Ovary (tissue), 10 donors: ENCODE measurements at regions of chr19 and their contacts with region 1.

Region 1: GRCh38 chr19:6048808-6049405 is 61.4 kb downstream of the RFX2 start:
- DNase-seq: peak; percentile 71 to 82 (median 82)
- H3K4me3 ChIP-seq: no peak overlapping the region
- H3K27ac ChIP-seq: no peak overlapping the region
- H3K4me1 ChIP-seq: peaks cover 1% of the 10 kb centered on the region
- H3K27me3 ChIP-seq: no peaks in the 10 kb centered on the region
- CTCF ChIP-seq: peak; percentile 68 to 78 (median 76)
- EP300 ChIP-seq: no peak
- POLR2A ChIP-seq: no peak

Region 2: DNA sequence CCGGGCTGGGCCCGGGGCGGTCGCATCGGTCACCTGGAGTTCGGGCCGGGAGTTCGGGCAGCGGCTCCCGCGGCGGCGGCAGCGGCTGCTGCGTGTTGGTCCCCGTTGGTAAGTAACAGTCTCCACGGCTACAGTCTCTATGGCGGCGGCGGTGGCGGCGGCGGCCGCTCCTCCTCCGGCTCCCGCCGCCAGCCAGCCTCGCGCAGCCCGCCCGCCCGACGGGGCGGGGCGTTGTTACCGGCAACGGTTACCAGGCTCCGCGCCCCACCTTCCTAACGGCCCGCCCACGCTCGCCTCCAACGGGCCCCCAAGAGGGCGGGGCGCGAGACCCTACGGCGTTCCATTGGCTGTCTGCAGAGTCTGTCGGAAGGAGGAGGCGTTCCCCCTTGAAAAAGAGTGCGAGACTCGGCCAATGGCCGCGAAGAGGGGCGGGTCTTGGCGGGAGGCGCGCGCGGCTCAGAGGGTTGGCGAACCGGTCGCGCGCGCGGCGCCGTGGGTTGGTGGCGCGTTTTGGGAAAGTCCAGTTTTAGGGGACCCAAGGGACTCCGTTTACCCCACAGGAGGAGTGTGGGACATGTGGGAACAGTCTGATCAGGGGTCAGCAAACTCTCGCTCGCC is 61.6 kb after region 1 on chr19 and contains the start of gene RFX2:
- intact Hi-C with region 1: loop called in 1 of 4 experiments (anchors 5 kb)
- DNase-seq: peak; percentile 99
- H3K4me3 ChIP-seq: peak within 1 kb of the TSS; percentile 85
- H3K27ac ChIP-seq: peak within 1 kb of the TSS; percentile 2 to 49
- H3K4me1 ChIP-seq: no peaks in the 10 kb centered on the region
- H3K27me3 ChIP-seq: no peaks in the 10 kb centered on the region
- CTCF ChIP-seq: no peak
- EP300 ChIP-seq: peak; percentile 38
- POLR2A ChIP-seq: peak; percentile 70
- total RNA-seq, gene RFX2: 9.7 to 31.2 (median 14.1) TPM

Region 3: DNA sequence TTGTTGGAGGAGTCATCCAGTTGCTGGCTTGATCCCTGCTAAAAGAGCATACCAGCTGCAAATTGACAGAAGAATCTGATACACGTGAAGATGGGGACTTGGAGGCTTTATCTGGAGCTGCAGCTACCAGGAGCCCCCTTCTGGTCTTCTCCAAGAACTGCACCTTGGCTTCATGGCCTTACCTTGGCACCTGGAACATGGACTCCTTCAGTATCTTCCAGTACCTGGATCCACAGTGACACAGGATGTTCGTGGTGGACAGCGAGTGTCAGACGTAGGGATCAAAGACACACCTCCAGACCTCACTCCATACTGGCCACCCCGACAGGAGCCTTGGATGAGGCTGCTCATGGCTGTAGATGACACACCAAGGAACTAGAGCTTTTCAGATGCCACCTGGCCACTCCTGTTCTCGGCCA is 76.7 kb after region 1 on chr19:
- intact Hi-C with region 1: loop called in 3 of 4 experiments (anchors 2 to 5 kb)
- DNase-seq: peak in 2 of 5 donors; percentile 24 to 53
- H3K4me3 ChIP-seq: no peak overlapping the region
- H3K27ac ChIP-seq: no peak overlapping the region
- H3K4me1 ChIP-seq: no peaks in the 10 kb centered on the region
- H3K27me3 ChIP-seq: no peaks in the 10 kb centered on the region
- CTCF ChIP-seq: peak; percentile 30 to 76 (median 41)
- EP300 ChIP-seq: no peak
- POLR2A ChIP-seq: no peak

Region 4: DNA sequence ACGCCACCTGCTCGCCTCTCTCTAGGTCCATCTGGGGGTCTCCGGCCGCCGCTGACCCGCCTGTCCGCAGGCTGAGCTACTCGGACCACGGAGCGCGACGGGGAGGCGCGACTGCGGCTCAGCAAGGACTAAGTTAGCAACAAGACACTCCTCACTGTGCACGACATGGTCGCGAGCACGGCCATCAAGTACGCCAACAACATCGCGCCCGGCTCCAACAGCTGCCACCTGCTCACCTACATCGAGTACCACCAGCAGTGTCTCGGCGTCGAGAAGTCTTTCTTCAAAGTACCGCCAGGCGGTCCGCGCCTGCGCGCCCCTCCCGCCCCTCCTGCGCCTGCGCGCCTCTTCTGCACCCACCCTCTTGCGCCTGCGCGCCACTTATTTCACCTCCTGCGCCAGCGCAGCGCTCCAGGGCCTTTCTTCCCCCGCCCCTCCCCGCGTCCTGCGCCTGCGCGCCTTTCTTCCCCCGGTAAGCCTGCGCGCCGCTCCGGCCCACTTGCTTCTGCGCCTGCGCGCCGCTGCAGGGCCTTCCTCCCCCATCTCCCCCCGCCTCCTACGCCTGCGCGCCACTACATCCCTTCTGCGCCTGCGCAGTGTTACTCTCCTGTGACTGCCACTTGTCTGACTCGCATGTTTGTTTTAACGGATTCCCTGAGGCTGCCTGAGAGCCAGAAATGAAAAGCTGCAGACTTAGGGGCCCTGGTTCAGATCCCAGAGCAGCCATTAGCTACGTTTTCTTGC is 150.5 kb after region 1 on chr19:
- intact Hi-C with region 1: loop called in 1 of 4 experiments (anchors 10 kb)
- DNase-seq: peak; percentile 99 to 100 (median 99)
- H3K4me3 ChIP-seq: peak overlapping the region; percentile 49
- H3K27ac ChIP-seq: no peak overlapping the region
- H3K4me1 ChIP-seq: no peaks in the 10 kb centered on the region
- H3K27me3 ChIP-seq: no peaks in the 10 kb centered on the region
- CTCF ChIP-seq: peak; percentile 14 to 78 (median 76)
- EP300 ChIP-seq: no peak
- POLR2A ChIP-seq: no peak